Heart right ventricle (tissue), 16 donors: ENCODE measurements at regions of chr1 and their contacts with region 1.

Region 1: DNA sequence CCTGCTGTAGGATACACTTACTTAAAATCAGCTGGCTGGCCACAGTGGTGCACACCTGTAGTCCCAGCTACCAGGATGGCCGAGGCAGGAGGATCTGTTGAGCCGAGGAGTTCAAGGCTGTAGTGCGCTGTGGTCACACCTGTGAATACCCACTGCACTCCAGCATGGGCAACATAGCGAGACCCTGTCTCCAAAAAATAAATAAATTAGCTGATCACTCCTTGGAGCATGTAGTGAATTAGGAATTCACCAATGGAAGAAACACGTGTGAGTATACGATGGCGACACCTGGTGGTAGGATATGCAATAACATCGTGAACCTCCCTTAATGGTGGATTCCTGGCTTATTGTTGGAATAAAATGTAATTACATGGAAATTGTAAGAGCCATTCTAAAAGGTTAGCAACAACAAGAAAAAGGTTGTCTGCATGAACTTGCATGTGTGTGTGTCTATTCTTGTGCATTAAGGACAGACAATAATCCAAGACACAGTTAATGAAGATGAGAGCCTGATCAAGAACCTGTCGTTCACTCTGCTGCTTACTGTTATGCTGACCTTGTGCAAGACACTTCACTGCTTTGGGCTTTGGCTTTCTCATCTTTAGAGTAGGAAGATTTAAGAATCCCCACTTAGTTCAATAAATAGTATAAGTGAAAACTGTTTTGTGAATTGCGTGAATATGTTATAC is 38.6 kb upstream of the COX20 start:
- DNase-seq: peak in 1 of 2 donors; percentile 48
- ATAC-seq: peak in 6 of 8 donors; percentile 64 to 72 (median 68)
- H3K4me3 ChIP-seq: no peak overlapping the region
- H3K27ac ChIP-seq: no peak overlapping the region
- H3K4me1 ChIP-seq: peaks cover 0 to 6% (median 0%) of the 10 kb centered on the region in 9 donors
- H3K27me3 ChIP-seq: no peaks in the 10 kb centered on the region
- CTCF ChIP-seq: peak; percentile 80 to 93 (median 87)

Region 2: DNA sequence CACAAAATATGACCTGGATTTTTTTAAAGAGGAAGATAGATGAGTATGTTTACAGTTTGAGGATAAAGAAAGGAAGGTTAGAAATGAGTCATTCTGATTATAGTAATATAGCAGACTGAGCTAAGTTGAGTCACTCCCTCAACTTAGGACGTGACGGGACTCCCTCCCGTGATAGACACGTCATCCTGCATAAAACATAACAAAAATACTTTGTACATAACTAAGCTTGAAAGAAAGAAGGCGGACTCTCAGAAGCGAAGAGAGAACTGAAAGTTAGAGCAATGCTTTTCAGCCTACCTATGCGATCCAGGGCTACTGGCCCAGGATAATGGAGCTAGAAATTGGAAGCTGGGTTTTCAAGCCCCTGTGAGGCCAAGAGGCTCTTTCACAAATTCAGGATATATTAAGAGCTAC is 196.9 kb before region 1 on chr1:
- intact Hi-C with region 1: loop called (anchors 1 to 5 kb)
- DNase-seq: no peak
- ATAC-seq: peak in 4 of 8 donors; percentile 24 to 77 (median 37)
- H3K4me3 ChIP-seq: no peak overlapping the region
- H3K27ac ChIP-seq: peak overlapping the region in 1 of 10 donors; percentile 62
- H3K4me1 ChIP-seq: peaks cover 0 to 11% (median 0%) of the 10 kb centered on the region in 9 donors
- H3K27me3 ChIP-seq: peaks cover 0 to 6% (median 0%) of the 10 kb centered on the region in 7 donors
- CTCF ChIP-seq: no peak

Region 3: DNA sequence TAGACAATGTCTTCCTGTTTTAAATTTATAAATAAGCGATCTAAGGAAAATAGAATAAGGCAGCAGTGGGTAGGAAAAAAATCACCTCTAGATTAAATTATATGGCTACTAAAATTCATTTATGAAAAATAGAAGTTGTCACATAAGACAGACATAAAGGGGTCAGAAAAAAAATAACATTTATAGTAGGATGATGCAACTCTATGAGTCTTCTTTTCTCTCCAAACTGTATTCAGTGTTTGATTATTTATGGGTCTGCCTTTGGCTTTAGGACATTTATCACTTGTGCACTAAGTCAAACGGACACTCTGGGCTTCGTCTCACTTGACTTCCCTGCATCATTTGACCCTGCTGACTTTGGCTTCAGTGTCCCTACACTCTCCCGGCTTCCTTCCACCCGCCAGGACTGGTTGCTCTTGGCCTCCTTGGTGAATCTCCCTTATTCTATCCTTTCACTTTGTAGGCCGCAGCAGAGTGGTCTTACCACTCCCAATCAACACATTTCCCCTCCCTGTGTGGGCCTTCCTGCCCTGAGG is 191.0 kb before region 1 on chr1:
- intact Hi-C with region 1: loop called (anchors 1 to 5 kb)
- DNase-seq: no peak
- ATAC-seq: no peak
- H3K4me3 ChIP-seq: no peak overlapping the region
- H3K27ac ChIP-seq: no peak overlapping the region
- H3K4me1 ChIP-seq: no peaks in the 10 kb centered on the region
- H3K27me3 ChIP-seq: peaks cover 0 to 6% (median 0%) of the 10 kb centered on the region in 7 donors
- CTCF ChIP-seq: no peak

Region 4: GRCh38 chr1:244989813-244990212 is 193.0 kb after region 1 on chr1:
- intact Hi-C with region 1: no loop called
- DNase-seq: no peak
- ATAC-seq: no peak
- H3K4me3 ChIP-seq: no peak overlapping the region
- H3K27ac ChIP-seq: no peak overlapping the region
- H3K4me1 ChIP-seq: peaks cover 0 to 6% (median 0%) of the 10 kb centered on the region in 9 donors
- H3K27me3 ChIP-seq: no peaks in the 10 kb centered on the region
- CTCF ChIP-seq: no peak

Region 5: DNA sequence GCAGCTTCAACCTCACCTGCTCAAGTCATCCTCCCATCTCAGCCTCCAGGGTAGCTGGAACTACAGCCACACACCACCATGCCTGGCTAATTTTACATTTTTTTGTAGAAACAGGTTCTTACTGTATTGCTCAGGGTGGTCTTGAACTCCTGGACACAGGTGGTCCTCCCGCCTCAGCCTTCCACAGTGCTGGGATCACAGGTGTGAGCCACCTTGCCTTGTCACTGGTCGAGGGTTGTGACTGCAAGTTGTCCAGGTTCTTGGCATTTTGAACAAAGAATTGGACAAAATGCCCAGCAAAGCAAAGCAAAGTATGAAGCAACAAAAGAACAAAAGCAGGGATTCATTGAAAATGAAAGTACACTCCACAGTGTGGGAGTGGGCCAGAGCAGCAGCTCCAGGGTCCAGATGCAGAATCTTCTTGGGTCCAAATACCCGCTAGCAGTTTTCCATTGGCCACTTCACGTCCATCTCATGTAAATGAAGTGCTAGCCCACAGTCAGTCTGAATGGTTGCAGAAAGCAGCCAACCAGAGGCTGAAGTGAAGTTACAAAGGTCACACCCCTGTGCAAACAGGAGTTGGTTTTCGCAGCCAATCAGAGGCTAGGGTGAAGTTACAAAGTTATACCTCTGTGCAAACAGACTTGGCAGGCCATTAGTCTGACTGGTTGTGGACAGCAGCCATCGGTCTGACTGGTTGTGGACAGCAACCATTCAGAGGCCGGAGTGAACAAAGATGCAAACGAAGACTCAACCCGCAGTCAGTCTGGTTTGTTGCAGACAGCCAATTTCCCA is 248.4 kb after region 1 on chr1:
- intact Hi-C with region 1: loop called (anchors 1 to 10 kb)
- DNase-seq: peak in 1 of 2 donors; percentile 74
- ATAC-seq: peak; percentile 34 to 84 (median 62)
- H3K4me3 ChIP-seq: peak overlapping the region in 2 of 10 donors; percentile 1 to 8
- H3K27ac ChIP-seq: peak overlapping the region in 6 of 10 donors; percentile 2 to 56 (median 34)
- H3K4me1 ChIP-seq: peaks cover 0 to 43% (median 13%) of the 10 kb centered on the region in 9 donors
- H3K27me3 ChIP-seq: no peaks in the 10 kb centered on the region
- CTCF ChIP-seq: no peak